MCF 10A (cell line): ENCODE measurements at regions of chr1 and their contacts with region 1.

Region 1: GRCh38 chr1:166432655-166433054 is 265.9 kb upstream of the FAM78B start:
- DNase-seq: no peak
- H3K4me3 Mint-ChIP-seq: no peak overlapping the region
- H3K27ac Mint-ChIP-seq: no peak overlapping the region
- H3K4me1 Mint-ChIP-seq: no peaks in the 10 kb centered on the region
- H3K27me3 Mint-ChIP-seq: no peaks in the 10 kb centered on the region
- CTCF ChIP-seq: no peak

Region 2: GRCh38 chr1:165933446-165934178 is 499.0 kb before region 1 on chr1:
- CTCF ChIA-PET with region 1: interaction called, 42 read pairs
- POLR2A ChIA-PET with region 1: no interaction called
- intact Hi-C with region 1: loop called (anchors 1 kb)
- DNase-seq: no peak
- H3K4me3 Mint-ChIP-seq: no peak overlapping the region
- H3K27ac Mint-ChIP-seq: no peak overlapping the region
- H3K4me1 Mint-ChIP-seq: no peaks in the 10 kb centered on the region
- H3K27me3 Mint-ChIP-seq: no peaks in the 10 kb centered on the region
- CTCF ChIP-seq: no peak

Region 3: DNA sequence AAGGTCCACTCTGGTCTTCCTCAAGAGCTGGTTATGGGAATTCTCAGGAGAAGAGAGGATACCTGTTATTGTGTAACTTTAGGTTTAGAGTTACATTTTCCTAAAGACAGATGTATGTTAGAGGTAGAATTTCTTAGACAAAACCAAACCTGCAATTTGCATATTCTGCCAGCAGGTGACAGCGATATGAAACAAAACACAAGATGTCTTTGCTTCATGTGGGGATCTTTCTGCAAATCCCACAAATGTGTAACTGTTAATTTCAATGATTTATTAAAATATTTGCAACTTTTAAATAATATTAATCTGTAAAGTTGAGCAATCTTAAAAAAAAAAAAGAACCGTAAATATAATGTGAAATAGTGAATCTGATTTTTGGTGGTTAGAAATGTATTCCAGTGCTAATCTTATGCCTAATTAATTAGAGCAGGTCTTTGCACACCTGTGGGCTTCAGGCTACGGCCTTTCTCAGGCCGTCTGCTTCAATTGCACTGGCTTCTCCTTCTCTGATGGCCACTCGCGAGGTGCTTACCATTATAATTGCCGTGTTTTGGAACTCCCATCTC is 299.3 kb before region 1 on chr1:
- CTCF ChIA-PET with region 1: interaction called, 16 read pairs
- POLR2A ChIA-PET with region 1: no interaction called
- intact Hi-C with region 1: loop called (anchors 1 kb)
- DNase-seq: peak; percentile 68
- H3K4me3 Mint-ChIP-seq: no peak overlapping the region
- H3K27ac Mint-ChIP-seq: no peak overlapping the region
- H3K4me1 Mint-ChIP-seq: no peaks in the 10 kb centered on the region
- H3K27me3 Mint-ChIP-seq: peaks cover 17% of the 10 kb centered on the region
- CTCF ChIP-seq: peak; percentile 83